HepG2 (cell line): ENCODE measurements at regions of chr5 and their contacts with region 1.

Region 1: DNA sequence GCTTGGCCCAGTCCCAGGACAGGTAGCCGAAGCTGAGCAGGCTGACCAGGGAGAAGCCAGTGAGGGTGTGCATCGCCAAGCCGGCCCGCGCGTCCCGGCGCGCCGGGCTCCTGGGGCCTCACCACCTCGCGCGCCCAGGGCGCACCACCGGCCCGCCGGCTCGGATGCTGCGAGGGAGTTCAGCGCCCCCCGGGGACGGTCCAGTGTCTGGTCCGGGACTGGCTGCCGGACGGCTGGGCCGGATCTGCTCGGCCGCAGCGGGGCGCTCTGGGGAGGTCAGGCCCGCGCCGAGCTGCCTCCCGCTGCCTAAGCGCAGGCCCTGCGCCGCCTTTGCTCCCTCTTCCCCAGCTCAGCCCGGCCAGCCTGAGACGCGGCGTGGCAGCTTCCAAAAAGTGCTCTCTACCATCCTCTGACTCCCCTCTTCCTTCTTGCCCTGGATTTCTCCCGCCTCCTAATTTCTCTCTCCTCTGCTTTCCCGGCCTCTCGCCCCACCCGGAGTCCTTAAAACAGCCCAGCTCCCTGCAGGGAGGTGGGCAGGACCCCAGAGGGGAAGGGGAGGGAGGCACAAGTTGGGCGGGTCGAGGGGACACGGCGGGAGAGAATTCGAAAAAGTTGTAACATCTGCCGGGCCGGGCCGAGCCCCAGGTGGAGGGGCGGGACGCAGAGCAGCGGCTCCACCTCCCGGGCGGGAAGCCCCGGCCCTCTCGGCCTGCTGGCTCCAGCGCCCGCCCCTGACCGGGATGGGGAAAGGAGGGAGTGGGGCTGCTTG is at the start of gene ARSI:
- DNase-seq: no peak
- ATAC-seq: peak; percentile 92
- H3K4me3 ChIP-seq: peak within 1 kb of the TSS; percentile 66 to 78 (median 72)
- H3K27ac ChIP-seq: no peak within 1 kb of the TSS
- H3K4me1 ChIP-seq: peaks cover 78% of the 10 kb centered on the region
- H3K27me3 ChIP-seq: no peaks in the 10 kb centered on the region
- CTCF ChIP-seq: peak; percentile 76
- EP300 ChIP-seq: no peak
- POLR2A ChIP-seq: no peak
- RAD21 ChIP-seq: peak; percentile 63
- total RNA-seq, gene ARSI: 17.6 and 33.9 TPM in 2 replicates

Region 2: GRCh38 chr5:150317048-150318003 is 14.8 kb after region 1 on chr5:
- CTCF ChIA-PET with region 1: interaction called, 3 read pairs
- POLR2A ChIA-PET with region 1: interaction called, 10 read pairs
- in situ Hi-C with region 1: no loop called
- intact Hi-C with region 1: loop called (anchors 1 kb)
- DNase-seq: peak; percentile 86
- ATAC-seq: peak; percentile 95
- H3K4me3 ChIP-seq: no peak overlapping the region; a peak in 2 of 6 replicates
- H3K27ac ChIP-seq: peak overlapping the region; percentile 20
- H3K4me1 ChIP-seq: peaks cover 54% of the 10 kb centered on the region
- H3K27me3 ChIP-seq: no peaks in the 10 kb centered on the region
- CTCF ChIP-seq: 0 out of 2 replicates have a peak, but pooled peaks have one; percentile 3
- EP300 ChIP-seq: peak in 1 of 2 experiments; percentile 56; a peak in 2 of 4 replicates
- POLR2A ChIP-seq: no peak
- RAD21 ChIP-seq: no peak